ENCODE measurements at regions of chr10 and their contacts with region 1.

Region 1: DNA sequence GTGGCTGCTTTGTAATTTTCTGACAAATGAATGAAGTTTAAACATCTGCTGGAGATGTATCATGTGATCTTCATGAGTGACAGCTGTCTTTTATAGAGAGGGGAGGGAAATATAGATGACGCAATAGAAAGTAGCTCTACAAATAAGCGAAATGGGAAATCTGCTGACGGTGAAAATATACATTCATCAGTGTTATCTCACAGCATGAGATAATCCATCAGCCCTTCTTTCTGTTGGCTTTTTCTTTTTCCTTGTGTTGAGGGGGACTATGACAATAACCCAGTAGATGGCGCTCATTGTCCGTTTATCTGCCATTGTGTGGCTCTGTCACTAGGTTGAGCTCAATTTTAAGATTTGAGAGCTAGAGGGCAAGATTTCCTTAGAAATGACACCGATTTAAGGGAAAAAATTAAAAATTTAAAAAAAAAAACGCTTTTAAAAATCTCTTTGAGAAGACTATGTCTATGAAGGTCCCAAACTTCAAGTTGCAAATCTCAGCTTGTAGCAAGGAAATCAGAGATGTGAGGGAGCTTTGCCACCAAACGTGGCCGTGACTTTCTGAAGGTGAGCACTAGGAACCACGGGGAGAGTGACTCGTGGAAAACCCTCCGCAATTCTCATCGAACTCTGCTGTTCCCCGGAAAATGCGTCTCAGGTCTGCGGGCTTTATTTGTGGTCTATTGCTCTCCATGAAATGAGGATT is 114.6 kb upstream of the SFMBT2 start:
- DNase-seq: peak; percentile 81
- ATAC-seq: peak; percentile 95
- H3K4me3 Mint-ChIP-seq: no peak overlapping the region
- H3K27ac Mint-ChIP-seq: no peak overlapping the region
- H3K4me1 Mint-ChIP-seq: peaks cover 20% of the 10 kb centered on the region
- H3K27me3 Mint-ChIP-seq: peaks cover 1% of the 10 kb centered on the region
- CTCF ChIP-seq: peak; percentile 82

Region 2: DNA sequence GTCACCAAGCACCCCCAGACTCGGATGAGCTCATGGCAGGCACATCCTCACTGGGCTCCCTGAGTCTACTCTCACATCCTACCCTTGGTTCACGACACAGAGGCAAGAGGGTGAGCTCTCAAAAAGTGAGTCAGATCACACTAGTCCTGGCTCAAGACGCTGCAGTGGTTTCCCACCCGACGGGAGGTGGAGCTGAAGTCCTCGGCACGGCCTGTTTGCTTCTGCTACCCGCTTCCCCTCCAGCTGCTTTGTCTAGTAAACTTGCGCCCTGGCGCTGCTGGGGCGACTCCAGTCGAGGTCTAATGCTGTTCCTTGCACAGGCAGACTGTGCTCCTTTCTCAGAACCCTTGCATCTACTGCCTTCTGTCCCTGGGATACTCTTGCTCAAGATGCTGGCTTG is 101.2 kb before region 1 on chr10:
- CTCF ChIA-PET with region 1: interaction called, 14 read pairs
- POLR2A ChIA-PET with region 1: no interaction called
- intact Hi-C with region 1: no loop called
- DNase-seq: peak; percentile 72
- ATAC-seq: peak; percentile 97
- H3K4me3 Mint-ChIP-seq: no peak overlapping the region
- H3K27ac Mint-ChIP-seq: no peak overlapping the region
- H3K4me1 Mint-ChIP-seq: peaks cover 19% of the 10 kb centered on the region
- H3K27me3 Mint-ChIP-seq: no peaks in the 10 kb centered on the region
- CTCF ChIP-seq: no peak

Region 3: GRCh38 chr10:7538970-7539667 is 13.7 kb after region 1 on chr10:
- CTCF ChIA-PET with region 1: interaction called, 20 read pairs
- POLR2A ChIA-PET with region 1: no interaction called
- intact Hi-C with region 1: no loop called
- DNase-seq: peak; percentile 57
- ATAC-seq: peak; percentile 94
- H3K4me3 Mint-ChIP-seq: peak overlapping the region; percentile 4
- H3K27ac Mint-ChIP-seq: peak overlapping the region; percentile 89
- H3K4me1 Mint-ChIP-seq: peaks cover 16% of the 10 kb centered on the region
- H3K27me3 Mint-ChIP-seq: no peaks in the 10 kb centered on the region
- CTCF ChIP-seq: no peak

Region 4: DNA sequence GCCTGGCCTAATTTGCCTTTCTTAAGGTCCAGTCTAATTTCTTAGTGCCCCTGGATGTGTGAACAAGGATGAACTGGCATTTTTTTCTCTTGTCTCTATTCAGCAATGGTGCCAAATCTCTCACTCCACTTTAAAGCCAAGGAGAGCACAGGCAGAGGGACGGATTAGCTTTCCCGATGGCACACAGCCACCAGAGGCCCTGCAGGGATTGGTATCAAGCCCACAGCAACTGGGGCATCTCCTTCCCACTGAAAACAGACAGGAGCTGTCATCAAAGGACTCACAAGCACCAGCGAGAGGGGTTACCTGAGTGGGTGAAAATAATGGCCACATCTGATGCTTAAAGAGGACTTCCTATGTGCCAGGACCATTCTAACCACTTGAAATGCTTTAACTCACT is 58.2 kb after region 1 on chr10:
- CTCF ChIA-PET with region 1: no interaction called
- POLR2A ChIA-PET with region 1: no interaction called
- intact Hi-C with region 1: no loop called
- DNase-seq: no peak
- ATAC-seq: no peak
- H3K4me3 Mint-ChIP-seq: no peak overlapping the region
- H3K27ac Mint-ChIP-seq: no peak overlapping the region
- H3K4me1 Mint-ChIP-seq: peaks cover 8% of the 10 kb centered on the region
- H3K27me3 Mint-ChIP-seq: no peaks in the 10 kb centered on the region
- CTCF ChIP-seq: no peak

Region 5: DNA sequence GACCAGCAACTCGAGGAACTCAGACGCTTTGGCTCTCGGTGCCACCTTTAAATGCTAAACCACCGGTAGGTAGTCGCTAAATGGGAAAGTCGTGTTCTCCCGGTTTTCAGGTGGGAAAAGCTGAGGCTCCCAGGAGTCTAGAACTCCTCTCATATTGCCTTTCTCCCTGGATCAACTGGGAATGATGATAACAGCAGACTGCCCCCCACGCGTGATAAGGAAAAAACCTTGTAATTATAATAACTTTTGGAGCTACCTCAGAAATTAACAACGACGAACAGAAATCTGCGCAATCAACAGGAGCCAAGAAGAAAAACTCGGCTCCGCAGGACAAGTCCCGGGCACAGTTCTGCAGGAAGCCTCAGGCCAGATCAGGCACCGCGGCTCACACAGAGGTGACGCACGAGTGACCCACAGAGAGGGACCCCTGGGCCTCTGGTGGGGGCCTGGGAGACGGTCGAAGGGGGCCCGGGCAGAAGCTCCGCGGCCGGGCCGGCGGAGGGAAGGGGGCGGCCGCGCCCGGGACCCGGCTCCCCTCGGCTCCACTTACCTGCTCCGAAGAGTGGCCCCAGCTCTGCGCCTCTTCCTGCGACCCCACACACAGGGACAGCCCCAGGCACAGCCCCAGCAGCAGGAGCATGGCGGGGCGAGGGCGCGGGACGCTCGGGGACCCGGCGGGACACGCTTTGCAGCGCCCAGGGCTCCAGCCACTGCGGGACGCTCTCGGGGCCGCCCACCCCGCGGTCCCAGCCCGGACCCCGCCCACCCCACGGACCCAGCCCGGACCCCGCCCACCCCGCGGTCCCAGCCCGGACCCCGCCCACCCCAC is 141.0 kb after region 1 on chr10 and contains the start of gene ITIH5:
- CTCF ChIA-PET with region 1: interaction called, 10 read pairs
- POLR2A ChIA-PET with region 1: no interaction called
- intact Hi-C with region 1: no loop called
- DNase-seq: no peak
- ATAC-seq: peak; percentile 27
- H3K4me3 Mint-ChIP-seq: peak within 1 kb of the TSS; percentile 55
- H3K27ac Mint-ChIP-seq: no peak within 1 kb of the TSS
- H3K4me1 Mint-ChIP-seq: peaks cover 9% of the 10 kb centered on the region
- H3K27me3 Mint-ChIP-seq: peaks cover 44% of the 10 kb centered on the region
- CTCF ChIP-seq: no peak
- total RNA-seq, gene ITIH5: not detected

Region 6: DNA sequence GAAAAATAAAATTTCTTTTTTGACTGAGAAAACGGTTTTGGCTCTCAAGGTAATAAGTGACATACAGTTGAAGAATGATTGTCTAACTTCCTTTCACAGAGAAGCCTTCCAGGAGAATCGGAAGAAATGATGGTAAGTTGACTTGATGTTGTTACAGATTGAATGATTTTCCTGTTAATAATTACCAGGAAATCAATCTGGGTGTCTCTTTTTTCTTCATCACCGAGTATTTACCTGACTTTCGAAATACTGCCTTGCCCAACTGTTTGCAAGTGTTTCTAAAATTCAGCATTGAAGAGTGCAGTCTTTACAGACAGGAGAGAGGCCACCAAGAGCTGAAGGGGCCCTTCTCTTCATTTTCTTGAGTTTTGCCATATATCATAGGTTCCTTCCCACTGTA is 181.6 kb after region 1 on chr10:
- CTCF ChIA-PET with region 1: interaction called, 12 read pairs
- POLR2A ChIA-PET with region 1: no interaction called
- intact Hi-C with region 1: no loop called
- DNase-seq: no peak
- ATAC-seq: no peak
- H3K4me3 Mint-ChIP-seq: no peak overlapping the region
- H3K27ac Mint-ChIP-seq: no peak overlapping the region
- H3K4me1 Mint-ChIP-seq: no peaks in the 10 kb centered on the region
- H3K27me3 Mint-ChIP-seq: peaks cover 20% of the 10 kb centered on the region
- CTCF ChIP-seq: no peak

Measured in activated CD8-positive, alpha-beta T cell treated with anti-CD3 and anti-CD28 coated beads for 36 hours (primary cell).